Heart right ventricle (tissue), 16 donors: ENCODE measurements at regions of chr5 and their contacts with region 1.

Region 1: DNA sequence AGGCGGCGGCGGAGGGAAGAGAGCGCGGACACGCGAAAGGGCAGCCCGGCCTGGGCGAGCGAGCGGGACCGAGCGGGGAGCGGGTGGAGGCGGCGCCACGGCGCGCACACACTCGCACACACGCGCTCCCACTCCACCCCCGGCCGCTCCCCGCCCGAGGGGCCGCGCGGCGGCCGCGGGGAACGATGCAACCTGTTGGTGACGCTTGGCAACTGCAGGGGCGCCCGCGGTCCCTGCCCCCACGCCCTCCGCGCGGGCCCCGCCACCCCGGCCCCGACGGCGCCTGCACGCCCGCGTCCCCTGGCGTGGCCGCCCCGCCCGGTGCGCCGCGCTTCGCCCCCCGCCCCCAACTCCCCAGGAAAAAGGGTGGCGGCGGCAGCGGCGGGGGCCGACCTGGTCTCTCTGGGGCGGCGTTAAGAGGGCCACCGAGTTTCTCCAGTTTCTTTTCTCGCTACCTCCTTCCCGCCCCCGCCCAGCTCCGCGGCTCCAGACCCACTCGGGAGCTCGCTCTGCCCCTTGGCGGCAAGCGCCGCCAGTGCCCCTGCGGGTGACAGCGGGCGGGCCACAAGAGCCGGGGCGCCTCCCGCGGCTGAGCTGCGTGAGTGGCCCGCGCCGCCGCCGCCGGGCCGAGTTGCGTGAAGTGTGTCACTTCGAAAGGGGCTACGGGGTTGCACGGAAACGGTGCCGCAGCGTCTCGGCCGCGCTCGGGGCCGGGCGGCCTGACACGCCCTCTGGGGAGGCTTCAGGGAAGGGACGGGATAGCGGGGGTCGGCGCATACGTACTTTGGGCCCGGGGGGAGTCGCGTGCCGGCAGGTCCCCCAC is at the start of gene NR3C1:
- DNase-seq: peak; percentile 88 to 91
- ATAC-seq: peak; percentile 68 to 91 (median 78)
- H3K4me3 ChIP-seq: peak within 1 kb of the TSS; percentile 65 to 97 (median 88)
- H3K27ac ChIP-seq: peak within 1 kb of the TSS; percentile 96 to 100 (median 99)
- H3K4me1 ChIP-seq: peaks cover 0 to 39% (median 18%) of the 10 kb centered on the region in 9 donors
- H3K27me3 ChIP-seq: no peaks in the 10 kb centered on the region
- CTCF ChIP-seq: peak; percentile 50 to 86 (median 63)
- total RNA-seq, gene NR3C1: 31.1 to 62.3 (median 47.6) TPM

Region 2: DNA sequence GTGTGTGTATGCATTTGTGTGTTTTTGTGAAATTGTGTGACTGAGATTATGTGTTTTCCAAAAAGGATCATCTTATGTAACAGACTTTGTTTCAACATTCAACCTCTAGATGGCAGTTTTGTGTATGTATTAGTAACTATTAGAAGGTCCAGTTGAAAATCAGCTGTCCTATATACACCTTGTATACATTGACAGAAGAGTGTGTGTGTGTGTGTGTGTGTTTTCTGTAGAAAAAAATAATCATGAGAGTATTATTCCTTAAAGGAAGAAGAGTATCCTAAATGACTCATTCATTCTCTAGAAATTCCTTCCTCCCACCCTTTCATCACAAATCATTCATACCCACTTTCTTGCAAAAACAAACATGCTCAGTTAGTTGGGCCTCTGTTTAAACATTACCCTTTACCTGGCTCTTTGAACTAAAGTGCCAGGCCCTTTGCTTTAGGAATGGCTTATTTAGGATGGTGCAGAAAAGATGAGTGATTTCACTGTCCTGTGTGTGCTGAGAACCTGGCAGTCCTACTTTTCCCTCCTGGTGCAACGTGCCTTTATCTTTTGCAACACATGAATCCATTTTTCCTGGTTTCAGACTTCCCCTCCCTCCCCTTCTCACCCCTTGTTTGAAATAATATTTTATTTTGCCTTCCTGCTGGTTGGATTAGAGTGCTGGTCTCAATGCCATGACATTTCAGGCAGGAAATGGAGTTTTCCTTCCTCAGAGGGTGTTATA is 481.4 kb before region 1 on chr5:
- intact Hi-C with region 1: loop called in 7 of 10 experiments (anchors 5 to 10 kb)
- DNase-seq: no peak
- ATAC-seq: peak in 6 of 8 donors; percentile 41 to 71 (median 58)
- H3K4me3 ChIP-seq: no peak overlapping the region
- H3K27ac ChIP-seq: peak overlapping the region in 9 of 10 donors; percentile 11 to 86 (median 44)
- H3K4me1 ChIP-seq: peaks cover 7 to 66% (median 43%) of the 10 kb centered on the region in 9 donors
- H3K27me3 ChIP-seq: no peaks in the 10 kb centered on the region
- CTCF ChIP-seq: peak in 7 of 9 donors; percentile 44 to 75 (median 60)

Region 3: GRCh38 chr5:143016777-143017516 is 386.9 kb before region 1 on chr5:
- intact Hi-C with region 1: loop called in 5 of 10 experiments (anchors 5 to 10 kb)
- DNase-seq: peak in 1 of 2 donors; percentile 32
- ATAC-seq: peak in 2 of 8 donors; percentile 46 to 48
- H3K4me3 ChIP-seq: no peak overlapping the region
- H3K27ac ChIP-seq: no peak overlapping the region
- H3K4me1 ChIP-seq: peaks cover 0 to 25% (median 9%) of the 10 kb centered on the region in 9 donors
- H3K27me3 ChIP-seq: no peaks in the 10 kb centered on the region
- CTCF ChIP-seq: peak in 8 of 9 donors; percentile 21 to 59 (median 42)

Region 4: GRCh38 chr5:143074414-143074996 is 329.3 kb before region 1 on chr5:
- intact Hi-C with region 1: no loop called
- DNase-seq: no peak
- ATAC-seq: no peak
- H3K4me3 ChIP-seq: no peak overlapping the region
- H3K27ac ChIP-seq: no peak overlapping the region
- H3K4me1 ChIP-seq: peaks cover 0 to 25% (median 10%) of the 10 kb centered on the region in 9 donors
- H3K27me3 ChIP-seq: no peaks in the 10 kb centered on the region
- CTCF ChIP-seq: no peak

Region 5: GRCh38 chr5:143124593-143124992 is 279.2 kb before region 1 on chr5:
- intact Hi-C with region 1: loop called in 2 of 10 experiments (anchors 5 to 10 kb)
- DNase-seq: no peak
- ATAC-seq: peak in 1 of 8 donors; percentile 38
- H3K4me3 ChIP-seq: no peak overlapping the region
- H3K27ac ChIP-seq: peak overlapping the region in 1 of 10 donors; percentile 17
- H3K4me1 ChIP-seq: peaks cover 13 to 82% (median 53%) of the 10 kb centered on the region in 9 donors
- H3K27me3 ChIP-seq: no peaks in the 10 kb centered on the region
- CTCF ChIP-seq: no peak

Region 6: GRCh38 chr5:143222287-143223231 is 181.2 kb before region 1 on chr5:
- intact Hi-C with region 1: loop called in 2 of 10 experiments (anchors 5 to 10 kb)
- DNase-seq: no peak
- ATAC-seq: peak in 6 of 8 donors; percentile 18 to 44 (median 26)
- H3K4me3 ChIP-seq: no peak overlapping the region
- H3K27ac ChIP-seq: peak overlapping the region in 2 of 10 donors; percentile 41 to 44
- H3K4me1 ChIP-seq: peaks cover 0 to 42% (median 30%) of the 10 kb centered on the region in 9 donors
- H3K27me3 ChIP-seq: no peaks in the 10 kb centered on the region
- CTCF ChIP-seq: no peak

Region 7: DNA sequence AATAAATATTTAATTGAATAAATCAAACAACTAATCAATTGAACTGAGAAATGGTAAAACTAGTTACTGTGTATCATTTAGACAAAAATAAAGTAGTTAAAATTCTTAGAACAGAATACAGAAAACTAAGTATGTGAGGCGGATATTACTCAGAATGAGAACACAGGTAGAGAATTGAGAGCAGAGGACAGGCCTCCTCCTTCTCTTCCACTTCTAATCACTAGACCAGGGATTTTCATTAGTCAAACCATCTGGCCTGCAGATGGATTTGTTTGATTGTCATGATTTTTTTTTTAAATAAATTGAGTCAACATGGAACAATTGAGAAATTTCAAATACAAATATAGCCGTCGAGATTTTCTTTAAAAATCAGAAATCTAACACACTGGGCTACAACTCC is 209.5 kb after region 1 on chr5:
- intact Hi-C with region 1: no loop called
- DNase-seq: no peak
- ATAC-seq: no peak
- H3K4me3 ChIP-seq: no peak overlapping the region
- H3K27ac ChIP-seq: no peak overlapping the region
- H3K4me1 ChIP-seq: peaks cover 0 to 14% (median 0%) of the 10 kb centered on the region in 9 donors
- H3K27me3 ChIP-seq: no peaks in the 10 kb centered on the region
- CTCF ChIP-seq: no peak

Region 8: GRCh38 chr5:143685246-143685802 is 281.5 kb after region 1 on chr5:
- intact Hi-C with region 1: loop called in 2 of 10 experiments (anchors 5 to 10 kb)
- DNase-seq: no peak
- ATAC-seq: no peak
- H3K4me3 ChIP-seq: no peak overlapping the region
- H3K27ac ChIP-seq: no peak overlapping the region
- H3K4me1 ChIP-seq: peaks cover 0 to 23% (median 10%) of the 10 kb centered on the region in 9 donors
- H3K27me3 ChIP-seq: no peaks in the 10 kb centered on the region
- CTCF ChIP-seq: peak; percentile 4 to 57 (median 28)